HCT116 (cell line): ENCODE measurements at regions of chr16 and their contacts with region 1.

Region 1: GRCh38 chr16:58299757-58300349 is 5.0 kb upstream of the PRSS54 start:
- DNase-seq: peak; percentile 13
- ATAC-seq: peak; percentile 89
- H3K4me3 ChIP-seq: no peak overlapping the region
- H3K27ac ChIP-seq: no peak overlapping the region
- H3K4me1 ChIP-seq: no peaks in the 10 kb centered on the region
- H3K27me3 ChIP-seq: no peaks in the 10 kb centered on the region
- CTCF ChIP-seq: peak; percentile 71 to 96 (median 87); a peak in 5 of 6 replicates
- POLR2A ChIP-seq: no peak
- RAD21 ChIP-seq: peak; percentile 75

Region 2: GRCh38 chr16:58035356-58036170 is 264.3 kb before region 1 on chr16:
- CTCF ChIA-PET with region 1: no interaction called
- POLR2A ChIA-PET with region 1: no interaction called
- RAD21 ChIA-PET with region 1: no interaction called
- intact Hi-C with region 1: no loop called
- DNase-seq: no peak
- ATAC-seq: no peak
- H3K4me3 ChIP-seq: no peak overlapping the region
- H3K27ac ChIP-seq: no peak overlapping the region; the same call in 1 of the 2 replicates
- H3K4me1 ChIP-seq: peaks cover 0 to 3% of the 10 kb centered on the region in 2 experiments; a peak in 1 of 4 replicates
- H3K27me3 ChIP-seq: no peaks in the 10 kb centered on the region
- CTCF ChIP-seq: no peak
- POLR2A ChIP-seq: no peak
- RAD21 ChIP-seq: no peak

Region 3: GRCh38 chr16:58137581-58137980 is 162.3 kb before region 1 on chr16:
- CTCF ChIA-PET with region 1: no interaction called
- POLR2A ChIA-PET with region 1: no interaction called
- RAD21 ChIA-PET with region 1: no interaction called
- intact Hi-C with region 1: loop called (anchors 2 kb)
- DNase-seq: no peak
- ATAC-seq: no peak
- H3K4me3 ChIP-seq: no peak overlapping the region
- H3K27ac ChIP-seq: no peak overlapping the region
- H3K4me1 ChIP-seq: no peaks in the 10 kb centered on the region
- H3K27me3 ChIP-seq: no peaks in the 10 kb centered on the region
- CTCF ChIP-seq: no peak
- POLR2A ChIP-seq: no peak
- RAD21 ChIP-seq: no peak

Region 4: DNA sequence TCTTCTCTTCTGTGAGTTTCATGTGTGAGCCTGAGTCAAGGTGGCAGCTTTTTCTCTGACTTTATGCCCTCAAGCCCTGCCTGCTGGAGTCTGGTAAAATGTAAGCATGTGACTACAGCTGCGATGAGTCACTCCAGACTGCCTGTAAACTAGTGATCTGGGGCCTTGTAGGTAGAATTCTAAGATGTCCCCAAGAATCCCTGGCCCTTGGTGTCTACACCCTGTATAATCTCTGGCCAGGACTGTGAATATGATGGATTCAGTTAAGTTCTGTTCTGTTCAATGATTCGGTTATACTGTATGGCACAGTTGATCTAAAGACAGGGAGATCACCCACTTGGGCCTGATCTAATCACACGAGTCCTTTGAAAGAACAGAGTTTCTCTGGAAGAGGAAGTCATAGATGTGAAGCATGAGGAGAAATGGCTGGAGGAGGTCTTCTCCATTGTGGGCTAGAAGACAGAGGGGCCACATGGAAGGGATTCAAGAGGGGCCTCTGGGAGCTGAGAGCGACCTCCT is 34.8 kb before region 1 on chr16:
- CTCF ChIA-PET with region 1: no interaction called
- POLR2A ChIA-PET with region 1: no interaction called
- RAD21 ChIA-PET with region 1: no interaction called
- intact Hi-C with region 1: loop called (anchors 5 kb)
- DNase-seq: no peak
- ATAC-seq: peak; percentile 81
- H3K4me3 ChIP-seq: no peak overlapping the region
- H3K27ac ChIP-seq: peak overlapping the region; percentile 10; the same call in 1 of the 2 replicates
- H3K4me1 ChIP-seq: peaks cover 4 to 15% of the 10 kb centered on the region in 2 experiments; a peak in 3 of 4 replicates
- H3K27me3 ChIP-seq: no peaks in the 10 kb centered on the region
- CTCF ChIP-seq: no peak
- POLR2A ChIP-seq: no peak
- RAD21 ChIP-seq: no peak